T-cell (primary cell): ENCODE measurements at regions of chr12 and their contacts with region 1.

Region 1: DNA sequence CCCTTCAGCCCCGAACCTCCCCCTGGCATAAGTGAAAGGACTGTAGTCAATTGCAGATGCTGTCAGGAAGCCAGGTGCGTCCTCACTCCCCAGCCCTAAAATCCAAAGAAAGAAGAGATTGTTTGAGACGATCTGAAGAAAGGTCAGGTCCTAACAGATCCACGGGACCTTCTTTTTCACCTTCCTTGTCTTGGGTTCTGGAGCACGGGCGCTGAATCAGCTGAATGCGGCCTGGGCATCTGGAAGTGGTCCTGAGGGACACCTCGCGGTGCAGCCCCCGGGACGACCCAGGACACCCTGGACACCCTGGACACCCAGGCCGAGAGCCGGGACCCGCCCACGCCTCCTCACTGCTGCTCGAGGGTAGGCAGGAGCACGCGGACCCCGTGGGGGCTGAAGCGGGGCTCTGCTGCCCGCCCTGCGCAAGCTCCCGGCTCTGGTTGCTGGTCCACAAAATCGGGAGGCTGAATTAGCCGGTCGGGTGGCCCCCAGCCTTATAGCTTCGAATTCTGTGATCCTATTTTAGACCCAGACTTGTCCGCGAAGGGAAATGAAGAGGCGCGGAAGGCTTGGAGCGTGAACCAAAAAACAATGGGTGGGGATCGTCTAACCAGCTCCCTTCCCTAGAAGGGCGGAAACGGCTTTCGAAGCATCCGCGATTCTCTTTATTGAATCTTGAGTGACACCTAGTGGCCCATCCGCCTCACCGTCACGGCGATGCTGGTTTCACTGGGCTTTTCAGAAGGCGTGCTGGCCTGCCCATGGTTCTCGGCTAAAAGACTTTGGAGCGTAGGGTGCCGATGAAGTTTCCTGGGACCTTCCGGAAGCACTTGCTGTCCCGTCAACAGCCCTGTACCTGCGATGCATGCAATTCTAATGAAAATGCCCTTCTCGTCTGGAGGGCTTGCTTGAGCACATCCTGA is 46.4 kb upstream of the PLXNC1 start:
- DNase-seq: peak; percentile 67 to 92 (median 79)
- ATAC-seq: peak; percentile 83 to 86 (median 85)
- H3K4me3 ChIP-seq: peak overlapping the region; percentile 73 to 80
- H3K4me3 Mint-ChIP-seq: peak overlapping the region; percentile 81 to 85 (median 85)
- H3K27ac ChIP-seq: peak overlapping the region; percentile 48
- H3K27ac Mint-ChIP-seq: peak overlapping the region; percentile 53 to 66
- H3K4me1 ChIP-seq: peaks cover 8 to 20% of the 10 kb centered on the region in 2 experiments
- H3K4me1 Mint-ChIP-seq: peaks cover 16 to 27% (median 21%) of the 10 kb centered on the region in 3 donors
- H3K27me3 ChIP-seq: peaks cover 0 to 24% of the 10 kb centered on the region in 2 experiments
- H3K27me3 Mint-ChIP-seq: peaks cover 9 to 19% of the 10 kb centered on the region in 2 donors

Region 2: DNA sequence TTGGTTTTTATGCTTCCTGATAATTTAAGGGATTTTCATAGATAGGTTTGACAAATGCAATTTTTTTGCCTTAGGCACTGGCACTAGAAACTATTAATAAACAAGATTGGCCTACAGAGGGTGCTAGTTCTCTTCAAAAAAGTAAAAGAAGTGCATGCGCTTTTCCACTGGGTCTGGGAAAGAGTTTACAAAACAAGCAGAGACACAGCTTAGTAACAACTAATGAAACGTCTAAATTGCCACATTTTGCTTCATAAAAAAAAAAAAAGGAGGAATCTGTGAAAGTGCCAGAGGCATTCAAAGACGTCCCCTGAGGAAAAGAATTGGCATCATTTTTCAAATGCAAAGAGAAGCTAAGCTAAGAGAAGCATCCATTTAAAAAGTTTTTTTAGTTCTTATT is 1114.6 kb before region 1 on chr12:
- CTCF ChIA-PET with region 1: interaction called, 5 to 25 read pairs
- POLR2A ChIA-PET with region 1: no interaction called
- DNase-seq: peak in 3 of 35 experiments; percentile 15 to 70 (median 24)
- ATAC-seq: peak; percentile 56 to 78 (median 67)
- H3K4me3 ChIP-seq: no peak overlapping the region
- H3K4me3 Mint-ChIP-seq: peak overlapping the region in 1 of 3 donors; percentile 49
- H3K27ac ChIP-seq: no peak overlapping the region
- H3K27ac Mint-ChIP-seq: peak overlapping the region in 1 of 2 donors; percentile 25
- H3K4me1 ChIP-seq: peaks cover 6 to 9% of the 10 kb centered on the region in 2 experiments
- H3K4me1 Mint-ChIP-seq: peaks cover 10 to 13% (median 10%) of the 10 kb centered on the region in 3 donors
- H3K27me3 ChIP-seq: no peaks in the 10 kb centered on the region
- H3K27me3 Mint-ChIP-seq: no peaks in the 10 kb centered on the region

Region 3: DNA sequence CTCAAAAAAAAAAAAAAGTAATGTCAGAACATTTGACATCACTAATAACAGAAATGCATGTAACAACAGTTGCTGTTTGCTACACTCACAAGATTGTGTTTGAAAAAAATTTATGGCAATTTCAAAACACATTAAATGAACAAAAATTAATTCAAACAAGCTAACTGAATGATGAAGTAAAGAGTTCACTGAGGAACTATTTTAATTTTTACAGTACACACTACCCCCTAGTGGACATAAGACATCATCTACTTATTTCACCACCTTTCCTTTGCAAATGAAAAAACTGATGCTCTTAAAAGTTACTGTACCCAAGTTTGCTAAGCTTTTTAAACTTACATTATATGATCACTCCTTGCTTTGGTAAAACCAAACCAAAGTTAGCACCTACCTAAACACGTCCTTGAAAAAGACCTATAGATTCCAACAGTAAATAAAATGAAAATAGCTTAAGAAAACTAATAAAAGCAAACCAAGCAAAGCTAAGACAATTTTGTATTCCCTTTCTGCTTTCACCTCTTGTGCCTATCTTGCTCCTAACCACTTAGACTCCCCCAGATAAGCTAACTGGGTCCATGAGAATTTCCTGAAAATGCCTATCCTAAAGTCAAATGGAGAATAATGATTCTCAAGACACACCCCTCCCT is 682.5 kb before region 1 on chr12:
- CTCF ChIA-PET with region 1: interaction called in 1 of 2 experiments, 19 read pairs
- POLR2A ChIA-PET with region 1: no interaction called
- DNase-seq: peak in 1 of 35 experiments; percentile 70
- ATAC-seq: peak; percentile 57 to 73 (median 66)
- H3K4me3 ChIP-seq: no peak overlapping the region
- H3K4me3 Mint-ChIP-seq: no peak overlapping the region
- H3K27ac ChIP-seq: no peak overlapping the region
- H3K27ac Mint-ChIP-seq: peak overlapping the region; percentile 71 to 78
- H3K4me1 ChIP-seq: peaks cover 15 to 43% of the 10 kb centered on the region in 2 experiments
- H3K4me1 Mint-ChIP-seq: peaks cover 86 to 90% (median 87%) of the 10 kb centered on the region in 3 donors
- H3K27me3 ChIP-seq: no peaks in the 10 kb centered on the region
- H3K27me3 Mint-ChIP-seq: no peaks in the 10 kb centered on the region

Region 4: DNA sequence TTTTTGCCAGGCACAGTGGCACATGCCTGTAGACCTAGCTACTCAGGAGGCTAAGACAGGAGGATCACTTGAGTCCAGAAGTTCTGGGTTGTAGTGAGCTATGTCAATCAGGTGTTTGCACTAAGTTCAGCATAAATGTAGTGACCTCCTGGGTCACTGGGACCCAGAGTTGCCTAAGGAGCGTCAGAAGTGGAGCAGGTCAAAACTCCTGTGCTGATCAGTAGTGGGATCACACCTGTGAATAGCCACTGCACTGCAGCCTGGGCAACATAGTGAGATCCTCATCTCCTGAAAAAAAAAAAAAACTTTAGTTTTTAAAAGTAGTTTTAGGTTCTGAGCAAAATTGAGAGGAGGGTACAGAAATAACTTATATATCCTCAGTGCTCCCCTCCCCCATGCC is 592.5 kb before region 1 on chr12:
- CTCF ChIA-PET with region 1: interaction called, 142 to 294 read pairs
- POLR2A ChIA-PET with region 1: interaction called in 1 of 2 experiments, 3 read pairs
- DNase-seq: no peak
- ATAC-seq: no peak
- H3K4me3 ChIP-seq: no peak overlapping the region
- H3K4me3 Mint-ChIP-seq: no peak overlapping the region
- H3K27ac ChIP-seq: no peak overlapping the region
- H3K27ac Mint-ChIP-seq: no peak overlapping the region
- H3K4me1 ChIP-seq: no peaks in the 10 kb centered on the region
- H3K4me1 Mint-ChIP-seq: peaks cover 0 to 5% (median 0%) of the 10 kb centered on the region in 3 donors
- H3K27me3 ChIP-seq: no peaks in the 10 kb centered on the region
- H3K27me3 Mint-ChIP-seq: no peaks in the 10 kb centered on the region

Region 5: DNA sequence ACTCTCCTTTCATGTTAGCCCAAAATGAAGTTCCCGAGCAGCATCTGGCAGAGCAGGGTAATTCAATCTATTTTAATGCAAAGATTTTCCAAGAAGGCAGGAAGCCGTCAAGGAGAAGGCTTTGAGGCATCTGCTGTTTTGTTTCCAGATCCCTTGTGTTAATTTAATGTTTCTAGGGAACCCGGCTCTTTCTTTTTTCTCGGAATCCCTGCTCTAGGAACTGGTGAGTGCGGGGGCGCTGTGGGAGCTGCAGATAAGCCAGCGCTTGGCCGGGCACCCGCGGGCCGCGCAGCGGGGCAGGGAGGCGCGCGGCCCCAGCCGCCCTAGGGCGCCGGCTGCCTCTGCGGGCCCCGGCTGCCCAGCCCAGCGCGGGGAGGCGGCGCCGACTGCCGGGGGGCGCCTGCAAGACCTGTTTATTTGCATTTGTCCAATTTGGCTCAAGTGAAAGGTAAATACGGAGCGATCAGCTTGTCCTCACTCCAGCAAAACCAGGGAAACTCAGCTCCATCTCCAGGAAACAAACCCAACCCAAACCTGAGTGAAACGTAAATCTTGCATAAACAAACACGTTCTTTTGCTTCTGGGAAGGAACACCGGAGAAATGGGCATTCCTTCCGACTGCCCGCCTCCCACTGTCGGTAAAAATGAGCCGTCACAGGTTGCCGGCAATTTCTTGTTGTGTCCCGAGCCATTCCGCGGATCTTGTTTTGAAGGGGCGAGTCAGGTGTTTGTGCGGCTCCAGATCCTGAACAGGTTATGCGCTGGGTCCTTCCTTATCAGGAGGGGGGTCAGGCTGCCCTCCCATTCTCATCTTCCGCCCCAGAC is 359.7 kb before region 1 on chr12:
- CTCF ChIA-PET with region 1: interaction called, 4 to 10 read pairs
- POLR2A ChIA-PET with region 1: no interaction called
- DNase-seq: peak in 33 of 35 experiments; percentile 7 to 68 (median 31)
- ATAC-seq: peak; percentile 90 to 95 (median 92)
- H3K4me3 ChIP-seq: peak overlapping the region; percentile 70 to 95
- H3K4me3 Mint-ChIP-seq: peak overlapping the region; percentile 76 to 91 (median 83)
- H3K27ac ChIP-seq: peak overlapping the region; percentile 71
- H3K27ac Mint-ChIP-seq: peak overlapping the region; percentile 83 to 98
- H3K4me1 ChIP-seq: peaks cover 6 to 10% of the 10 kb centered on the region in 2 experiments
- H3K4me1 Mint-ChIP-seq: peaks cover 23 to 57% (median 57%) of the 10 kb centered on the region in 3 donors
- H3K27me3 ChIP-seq: no peaks in the 10 kb centered on the region
- H3K27me3 Mint-ChIP-seq: no peaks in the 10 kb centered on the region

Region 6: DNA sequence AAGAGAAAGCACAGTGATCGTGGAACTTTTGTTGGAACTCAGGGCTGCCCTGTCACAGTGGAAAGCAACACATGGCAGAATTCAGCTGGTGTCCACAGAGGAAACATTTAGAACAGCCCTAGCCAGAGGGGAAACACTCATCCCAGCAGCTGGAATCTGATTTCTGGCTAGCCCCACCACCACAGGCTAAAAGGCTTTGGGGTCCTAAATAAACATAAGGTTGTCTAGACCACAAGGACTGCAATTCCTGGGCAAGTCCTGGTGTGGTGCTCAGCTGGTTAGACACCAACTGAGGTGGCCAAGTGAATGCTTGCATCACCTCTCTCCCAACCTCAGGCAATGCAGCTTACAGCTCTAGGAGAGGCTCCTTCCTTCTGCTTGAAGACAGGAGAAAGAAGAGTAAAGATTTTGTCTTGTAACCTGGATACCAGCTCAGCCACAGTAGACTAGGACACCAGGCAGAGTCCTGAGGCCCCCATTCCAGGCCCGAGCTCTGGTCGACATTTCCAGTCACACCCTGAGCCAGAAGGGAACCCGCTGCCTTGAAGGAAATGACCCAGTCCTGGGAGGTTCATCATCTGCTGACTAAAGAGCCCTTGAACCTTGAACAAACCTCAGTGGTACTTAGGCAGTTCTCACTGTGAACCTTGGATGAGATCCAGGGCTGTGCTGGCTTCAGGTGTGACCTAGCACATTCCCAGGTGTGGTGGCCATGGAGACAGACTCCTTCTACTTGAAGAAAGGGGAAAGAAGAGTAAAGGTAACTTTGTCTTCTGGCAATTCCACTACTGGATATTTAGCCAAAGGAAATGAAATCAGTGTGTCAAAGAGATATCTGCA is 39.0 kb before region 1 on chr12:
- CTCF ChIA-PET with region 1: no interaction called
- POLR2A ChIA-PET with region 1: no interaction called
- DNase-seq: no peak
- ATAC-seq: no peak
- H3K4me3 ChIP-seq: no peak overlapping the region
- H3K4me3 Mint-ChIP-seq: no peak overlapping the region
- H3K27ac ChIP-seq: no peak overlapping the region
- H3K27ac Mint-ChIP-seq: no peak overlapping the region
- H3K4me1 ChIP-seq: no peaks in the 10 kb centered on the region
- H3K4me1 Mint-ChIP-seq: no peaks in the 10 kb centered on the region
- H3K27me3 ChIP-seq: peaks cover 0 to 2% of the 10 kb centered on the region in 2 experiments
- H3K27me3 Mint-ChIP-seq: peaks cover 0 to 4% of the 10 kb centered on the region in 2 donors

Region 7: DNA sequence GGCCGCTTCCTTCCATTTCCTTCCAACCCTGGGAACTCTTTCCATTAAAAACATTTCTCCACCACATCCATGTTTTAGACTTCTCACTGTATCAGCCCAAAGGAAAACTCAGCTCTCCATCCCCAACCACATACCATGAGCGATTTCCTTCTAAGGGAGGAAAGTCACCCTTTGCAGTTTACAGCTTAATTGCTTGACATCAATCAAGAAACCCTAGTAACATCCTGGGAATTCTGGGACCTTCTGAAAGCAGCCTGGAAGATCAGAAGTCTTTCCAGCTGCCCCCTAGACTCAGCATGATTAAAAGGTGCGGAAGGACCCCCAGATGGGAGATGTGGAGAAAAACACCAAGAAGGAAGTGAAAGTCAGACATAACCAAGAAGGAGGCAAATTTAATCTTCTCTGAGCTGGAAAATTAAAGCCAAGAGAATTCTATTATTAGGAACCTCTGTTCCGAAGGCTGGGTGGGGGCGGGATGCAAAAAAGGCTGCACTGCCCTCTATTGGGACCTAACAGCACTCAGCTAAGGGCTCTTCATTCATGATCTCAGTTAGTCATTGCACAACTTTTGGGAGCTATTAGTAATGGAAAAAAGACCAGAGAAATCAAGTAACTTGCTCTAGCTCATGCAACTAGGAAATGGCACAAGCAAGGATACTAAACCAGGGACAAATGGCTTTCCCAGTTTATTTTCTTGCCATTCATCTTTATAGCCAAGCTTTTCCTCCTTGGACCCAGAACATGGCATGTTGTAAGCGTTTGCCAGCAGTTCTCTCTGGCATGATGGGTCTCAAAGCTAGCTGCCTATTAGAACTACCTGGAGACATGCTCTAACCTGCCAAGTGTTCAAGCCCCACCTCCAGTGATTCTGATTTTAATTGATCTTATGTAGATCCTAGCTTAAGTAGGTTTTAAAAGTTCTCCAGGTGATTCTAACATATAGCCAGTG is 26.7 kb before region 1 on chr12:
- CTCF ChIA-PET with region 1: interaction called, 5 to 20 read pairs
- POLR2A ChIA-PET with region 1: no interaction called
- DNase-seq: peak in 7 of 35 experiments; percentile 7 to 38 (median 8)
- ATAC-seq: no peak
- H3K4me3 ChIP-seq: no peak overlapping the region
- H3K4me3 Mint-ChIP-seq: no peak overlapping the region
- H3K27ac ChIP-seq: no peak overlapping the region
- H3K27ac Mint-ChIP-seq: no peak overlapping the region
- H3K4me1 ChIP-seq: peaks cover 6 to 10% of the 10 kb centered on the region in 2 experiments
- H3K4me1 Mint-ChIP-seq: peaks cover 20 to 29% (median 21%) of the 10 kb centered on the region in 3 donors
- H3K27me3 ChIP-seq: peaks cover 0 to 10% of the 10 kb centered on the region in 2 experiments
- H3K27me3 Mint-ChIP-seq: peaks cover 0 to 3% of the 10 kb centered on the region in 2 donors

Region 8: DNA sequence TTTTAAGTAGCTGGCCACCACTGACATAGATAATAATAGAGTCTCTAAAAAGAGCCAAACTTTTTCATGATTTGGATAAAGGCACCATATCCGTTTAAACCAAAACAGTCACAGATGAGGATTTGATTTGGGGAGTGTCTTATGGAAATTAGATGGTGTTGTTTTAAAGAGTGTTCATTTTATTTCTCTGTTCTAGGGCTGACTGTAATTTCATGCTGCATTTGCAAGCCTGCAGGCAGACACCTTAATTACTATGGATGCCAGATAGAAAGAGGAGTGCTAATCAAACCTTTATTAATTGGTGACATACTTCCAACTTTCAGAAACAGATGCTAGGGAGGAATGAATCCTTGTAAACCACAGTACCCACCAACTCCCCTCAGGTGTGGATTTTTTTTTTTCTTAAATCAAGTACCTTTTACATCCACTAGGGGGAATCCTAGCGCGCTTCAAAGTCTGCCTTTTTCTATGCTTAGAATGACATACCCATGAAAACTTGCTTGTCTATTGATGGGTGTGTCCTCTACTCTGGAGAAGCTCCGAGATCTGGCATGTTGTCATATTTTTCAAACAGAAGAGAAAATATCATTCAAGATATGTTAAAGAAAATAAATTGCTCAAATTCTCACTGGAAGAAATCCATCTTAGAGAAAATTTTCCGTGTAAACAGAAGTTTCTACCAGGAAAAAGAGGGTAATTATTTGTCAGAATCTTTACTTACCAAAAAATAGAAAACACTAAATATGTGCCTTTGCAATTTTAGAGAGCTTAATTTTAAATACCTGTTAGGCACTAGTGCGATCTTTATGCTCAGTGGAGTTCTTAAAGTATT is 32.2 kb after region 1 on chr12:
- CTCF ChIA-PET with region 1: interaction called, 3 to 16 read pairs
- POLR2A ChIA-PET with region 1: no interaction called
- DNase-seq: peak in 20 of 35 experiments; percentile 10 to 76 (median 22)
- ATAC-seq: peak; percentile 80 to 90 (median 86)
- H3K4me3 ChIP-seq: no peak overlapping the region
- H3K4me3 Mint-ChIP-seq: no peak overlapping the region
- H3K27ac ChIP-seq: no peak overlapping the region
- H3K27ac Mint-ChIP-seq: no peak overlapping the region
- H3K4me1 ChIP-seq: no peaks in the 10 kb centered on the region
- H3K4me1 Mint-ChIP-seq: peaks cover 3 to 9% (median 3%) of the 10 kb centered on the region in 3 donors
- H3K27me3 ChIP-seq: no peaks in the 10 kb centered on the region
- H3K27me3 Mint-ChIP-seq: no peaks in the 10 kb centered on the region